ENCODE measurements at regions of chr5 and their contacts with region 1.

Region 1: DNA sequence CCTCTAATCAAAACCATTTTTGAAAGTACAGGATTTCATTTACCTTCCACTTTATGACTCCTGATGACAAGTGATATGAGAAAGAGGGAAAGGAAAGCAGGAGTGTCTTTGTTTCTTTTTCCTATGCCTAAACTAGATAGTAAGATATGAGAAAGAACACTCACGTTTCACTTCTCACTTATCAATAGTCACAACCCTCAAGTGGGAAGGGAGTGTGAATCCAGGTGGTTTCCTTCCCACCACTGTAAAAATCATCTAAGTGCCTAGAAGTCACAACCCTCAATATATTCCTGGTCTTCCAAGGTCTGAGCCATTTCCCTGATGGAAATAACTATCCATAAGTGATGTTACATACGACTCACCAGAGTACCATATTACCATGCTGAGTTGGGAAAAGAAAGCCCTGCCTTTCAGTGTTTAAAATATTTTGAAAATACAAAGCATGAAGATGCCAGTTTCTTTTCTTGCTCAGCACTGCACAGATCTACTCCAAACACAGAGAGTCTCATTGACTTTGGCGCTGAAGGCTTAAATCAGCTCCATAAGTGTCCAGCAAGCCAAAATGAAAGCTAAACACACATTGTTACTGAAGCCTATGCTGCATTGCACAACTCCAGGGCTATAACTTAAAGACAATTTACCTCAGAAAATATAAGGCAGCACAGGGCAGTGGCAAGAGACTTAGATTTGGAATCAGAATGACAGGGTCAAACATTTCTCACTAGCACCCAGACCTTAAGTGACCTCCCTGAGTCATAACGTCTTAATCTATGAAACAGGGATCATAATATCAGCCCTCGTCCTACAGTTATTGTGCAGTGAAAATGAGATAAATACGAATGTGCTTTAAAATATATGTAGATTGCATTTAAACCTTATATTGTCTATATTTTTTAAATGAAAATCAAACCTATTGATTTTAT is 301.2 kb downstream of the KIAA0825 start:
- DNase-seq: no peak
- H3K4me3 ChIP-seq: no peak overlapping the region
- H3K4me3 Mint-ChIP-seq: no peak overlapping the region
- H3K27ac Mint-ChIP-seq: no peak overlapping the region
- H3K4me1 ChIP-seq: no peaks in the 10 kb centered on the region
- H3K4me1 Mint-ChIP-seq: peaks cover 5% of the 10 kb centered on the region
- H3K27me3 ChIP-seq: no peaks in the 10 kb centered on the region
- H3K27me3 Mint-ChIP-seq: peaks cover 2% of the 10 kb centered on the region
- CTCF ChIP-seq: no peak

Region 2: DNA sequence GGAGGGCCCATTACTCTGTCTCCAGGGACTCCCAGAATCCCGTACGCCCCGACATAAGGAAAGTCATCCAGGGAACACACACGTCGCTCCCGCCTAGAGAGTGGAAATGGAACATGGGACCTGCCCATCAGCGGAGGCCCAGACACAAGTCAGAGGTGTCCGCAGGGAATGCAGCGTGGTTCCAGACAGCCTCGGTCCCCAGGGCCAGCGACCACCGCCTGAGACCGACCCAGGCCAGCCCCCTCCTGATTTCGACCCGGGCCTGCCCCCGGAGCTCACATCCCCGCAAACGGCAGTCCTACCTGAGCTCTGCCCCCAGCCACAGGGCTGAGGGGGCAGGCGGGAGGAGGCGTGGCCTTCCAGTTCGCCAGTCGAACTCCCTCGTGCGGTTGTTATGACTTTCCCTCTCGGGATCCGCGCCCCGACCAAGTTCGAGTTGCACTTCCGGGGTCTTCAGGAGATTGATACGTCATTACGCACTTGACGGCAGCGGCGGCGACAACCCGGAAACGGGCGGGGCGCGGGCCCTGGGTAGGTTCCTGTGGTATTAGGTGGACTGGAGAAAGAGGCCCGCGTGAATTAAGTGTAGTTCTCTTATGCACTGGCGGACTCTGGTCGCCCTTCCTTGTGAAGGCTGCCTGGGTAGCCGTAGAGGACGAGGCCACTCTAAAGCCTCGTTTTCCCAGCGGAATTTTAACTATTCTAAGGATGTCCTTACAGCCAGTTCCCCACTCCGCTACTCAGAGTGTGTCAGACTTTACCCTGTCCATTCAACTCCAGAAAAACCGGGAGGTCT is 205.8 kb before region 1 on chr5:
- CTCF ChIA-PET with region 1: no interaction called
- POLR2A ChIA-PET with region 1: no interaction called
- intact Hi-C with region 1: loop called (anchors 5 kb)
- DNase-seq: peak; percentile 96 to 97
- H3K4me3 ChIP-seq: peak overlapping the region; percentile 86
- H3K4me3 Mint-ChIP-seq: peak overlapping the region; percentile 92
- H3K27ac Mint-ChIP-seq: peak overlapping the region; percentile 96
- H3K4me1 ChIP-seq: peaks cover 13% of the 10 kb centered on the region
- H3K4me1 Mint-ChIP-seq: peaks cover 20% of the 10 kb centered on the region
- H3K27me3 ChIP-seq: no peaks in the 10 kb centered on the region
- H3K27me3 Mint-ChIP-seq: no peaks in the 10 kb centered on the region
- CTCF ChIP-seq: peak in 1 of 2 experiments; percentile 40

Region 3: DNA sequence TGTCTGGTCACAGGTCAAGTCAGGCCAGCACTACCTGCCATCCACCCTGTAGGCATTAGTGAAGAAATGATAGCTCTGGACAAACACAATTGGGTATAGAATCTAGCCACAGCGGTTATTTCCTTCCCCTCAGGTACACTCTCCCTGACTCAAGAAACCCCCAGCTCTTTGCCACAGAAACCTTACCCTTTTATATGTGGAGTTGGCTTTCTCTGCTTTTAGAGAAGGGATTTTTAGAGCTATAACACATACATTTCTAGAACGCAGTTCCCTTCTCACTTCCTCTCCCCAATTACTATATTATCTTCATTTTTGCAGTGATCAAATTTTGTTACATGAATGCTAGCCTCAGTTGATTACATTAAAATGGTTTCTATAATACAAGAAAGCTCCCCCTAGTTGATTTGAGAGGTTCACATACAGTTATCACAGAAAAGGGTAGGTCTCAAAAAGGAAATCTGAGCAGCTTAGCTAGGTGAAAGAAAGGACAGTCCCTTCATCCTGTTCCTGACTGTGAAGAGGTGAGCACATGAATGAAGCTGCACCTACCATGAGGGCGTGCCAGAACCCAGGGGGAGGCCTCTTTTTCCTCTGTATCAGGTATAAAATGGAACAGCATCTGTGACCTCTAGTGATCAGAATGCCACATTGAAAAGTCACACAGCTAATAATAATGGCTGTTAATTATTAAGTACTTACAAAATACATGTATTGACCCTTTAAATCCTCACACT is 124.4 kb before region 1 on chr5:
- CTCF ChIA-PET with region 1: no interaction called
- POLR2A ChIA-PET with region 1: no interaction called
- intact Hi-C with region 1: loop called (anchors 10 kb)
- DNase-seq: peak in 1 of 2 experiments; percentile 21
- H3K4me3 ChIP-seq: no peak overlapping the region
- H3K4me3 Mint-ChIP-seq: no peak overlapping the region
- H3K27ac Mint-ChIP-seq: no peak overlapping the region
- H3K4me1 ChIP-seq: 0 out of 2 replicates have a peak, but pooled peaks cover 3% of the 10 kb centered on the region
- H3K4me1 Mint-ChIP-seq: peaks cover 8% of the 10 kb centered on the region
- H3K27me3 ChIP-seq: no peaks in the 10 kb centered on the region
- H3K27me3 Mint-ChIP-seq: no peaks in the 10 kb centered on the region
- CTCF ChIP-seq: no peak